ENCODE measurements at regions of chr1 and their contacts with region 1.

Region 1: DNA sequence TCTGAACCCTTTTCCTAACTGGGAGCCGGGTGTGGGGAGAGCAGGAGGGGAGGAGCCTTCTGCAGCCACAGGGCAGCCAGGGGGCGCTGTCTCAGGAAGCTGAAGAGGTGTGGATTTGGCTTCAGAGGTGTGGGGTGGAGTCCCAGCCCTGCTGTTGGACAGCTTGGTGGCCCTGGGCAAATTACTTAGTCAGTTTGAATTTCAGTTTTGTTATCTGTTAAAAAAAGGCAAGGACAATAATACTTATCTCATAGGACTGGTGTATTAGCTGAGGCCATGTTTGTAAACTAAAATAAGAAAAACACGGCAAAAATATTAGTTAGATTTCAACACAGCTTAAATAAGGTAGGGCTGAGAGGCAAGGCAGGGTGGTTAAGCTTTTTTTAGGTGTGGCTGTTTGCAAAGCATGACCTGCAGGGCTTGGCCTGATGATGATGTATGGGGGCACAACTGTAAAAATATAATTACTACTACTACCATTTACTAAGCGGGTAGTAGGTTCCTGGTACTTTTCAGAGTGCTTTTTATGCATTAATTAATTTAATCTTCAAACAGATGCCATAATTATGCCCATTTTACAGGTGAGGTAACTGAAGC is 111.8 kb downstream of the PLXNA2 start:
- DNase-seq: peak; percentile 84 to 91 (median 86)
- ATAC-seq: peak; percentile 95
- H3K4me3 ChIP-seq: no peak overlapping the region
- H3K27ac ChIP-seq: peak overlapping the region in 2 of 4 donors; percentile 5 to 25
- H3K4me1 ChIP-seq: peaks cover 45% of the 10 kb centered on the region
- H3K27me3 ChIP-seq: no peaks in the 10 kb centered on the region
- CTCF ChIP-seq: peak; percentile 72 to 87 (median 83)
- POLR2A ChIP-seq: no peak

Region 2: DNA sequence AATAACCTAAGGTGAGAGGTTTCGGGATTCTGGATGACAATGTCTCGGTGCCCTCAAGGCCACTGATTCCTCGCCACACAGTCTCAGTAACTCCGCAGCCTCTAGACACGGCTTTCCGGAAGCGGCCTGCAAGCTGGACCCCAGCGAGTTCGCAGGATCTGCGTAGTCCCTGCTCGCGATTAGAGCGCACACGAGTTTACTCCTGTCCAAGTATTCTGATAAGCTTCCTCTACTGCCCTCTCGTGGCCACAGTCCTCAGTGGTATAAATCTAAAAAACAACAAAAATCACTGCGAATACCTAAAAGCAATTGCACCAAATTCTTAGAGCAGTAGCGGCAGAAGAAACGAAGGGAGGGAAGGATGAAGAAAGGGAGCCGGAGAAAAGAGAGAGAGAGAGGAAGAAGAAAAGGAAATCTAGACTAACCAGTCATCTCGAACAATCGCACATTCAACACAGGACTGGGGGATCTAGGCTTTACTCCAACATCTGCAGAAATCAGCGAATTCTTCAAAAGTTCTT is 112.9 kb after region 1 on chr1:
- intact Hi-C with region 1: loop called (anchors 10 kb)
- DNase-seq: peak; percentile 93 to 96 (median 94)
- ATAC-seq: peak; percentile 70
- H3K4me3 ChIP-seq: no peak overlapping the region
- H3K27ac ChIP-seq: peak overlapping the region; percentile 63 to 89 (median 84)
- H3K4me1 ChIP-seq: peaks cover 32% of the 10 kb centered on the region
- H3K27me3 ChIP-seq: no peaks in the 10 kb centered on the region
- CTCF ChIP-seq: peak; percentile 37 to 95 (median 92)
- POLR2A ChIP-seq: peak in 1 of 3 donors; percentile 28